ENCODE measurements at regions of chr14 and their contacts with region 1.

Region 1: GRCh38 chr14:54773171-54773975 is 129.3 kb downstream of the GCH1 start:
- DNase-seq: peak; percentile 92 to 96
- ATAC-seq: peak; percentile 90
- H3K4me3 ChIP-seq: no peak overlapping the region
- H3K27ac ChIP-seq: peak overlapping the region; percentile 98 to 99
- H3K4me1 ChIP-seq: peaks cover 6 to 9% of the 10 kb centered on the region in 2 donors
- H3K27me3 ChIP-seq: no peaks in the 10 kb centered on the region

Region 2: GRCh38 chr14:54566410-54567223 is 206.8 kb before region 1 on chr14 and contains the start of gene SAMD4A:
- intact Hi-C with region 1: loop called (anchors 1 to 2 kb)
- DNase-seq: peak; percentile 87 to 92
- ATAC-seq: peak; percentile 55
- H3K4me3 ChIP-seq: peak within 1 kb of the TSS; percentile 94 to 98
- H3K27ac ChIP-seq: peak within 1 kb of the TSS; percentile 95 to 99
- H3K4me1 ChIP-seq: no peaks in the 10 kb centered on the region
- H3K27me3 ChIP-seq: no peaks in the 10 kb centered on the region
- total RNA-seq, gene SAMD4A: 131 to 386 TPM

Region 3: DNA sequence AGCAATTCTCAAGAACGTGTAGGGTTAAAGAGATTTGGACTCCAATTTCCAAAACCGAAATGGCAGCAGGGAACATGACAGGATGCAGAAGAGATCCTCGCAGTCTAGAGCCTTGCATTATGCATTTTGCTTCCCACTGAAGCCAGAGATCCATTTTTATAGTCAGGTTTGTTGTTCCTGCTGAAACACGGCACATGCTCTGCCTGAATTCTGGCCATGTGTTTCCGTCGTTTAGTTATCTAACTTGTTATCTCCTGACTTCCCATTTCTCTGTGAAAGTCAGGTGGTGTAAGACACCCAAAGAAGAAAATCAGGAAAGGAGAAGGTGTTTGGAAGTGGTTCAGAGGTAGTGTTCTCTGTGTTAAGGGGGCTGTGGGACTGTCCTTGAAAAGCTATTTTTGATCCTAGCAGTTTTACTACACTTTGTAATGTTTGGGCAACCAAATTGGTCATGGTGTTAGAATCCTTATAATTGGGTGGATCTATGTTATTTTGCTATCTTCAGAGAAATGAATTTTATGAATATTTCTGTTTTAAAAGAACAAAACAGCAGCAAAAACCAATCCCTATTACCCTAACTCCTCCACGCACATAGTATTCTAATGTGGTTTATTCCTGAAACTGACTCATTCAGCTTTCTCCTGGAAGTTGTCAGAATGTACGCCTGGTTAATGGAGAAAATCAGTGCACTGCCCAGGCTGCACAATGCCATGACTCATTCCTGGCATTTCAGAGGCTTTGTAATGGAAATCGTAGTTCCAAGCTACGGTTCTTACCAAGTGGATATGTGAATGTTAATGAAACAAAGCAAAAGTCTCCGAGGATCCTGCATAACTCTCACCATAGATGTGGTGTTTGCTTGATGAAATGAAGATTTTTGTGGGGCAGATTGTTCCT is 96.3 kb before region 1 on chr14:
- intact Hi-C with region 1: loop called in 1 of 2 experiments (anchors 2 kb)
- DNase-seq: peak in 1 of 2 donors; percentile 65
- ATAC-seq: peak; percentile 92
- H3K4me3 ChIP-seq: no peak overlapping the region
- H3K27ac ChIP-seq: peak overlapping the region; percentile 91 to 99
- H3K4me1 ChIP-seq: peaks cover 8 to 14% of the 10 kb centered on the region in 2 donors
- H3K27me3 ChIP-seq: no peaks in the 10 kb centered on the region

Region 4: DNA sequence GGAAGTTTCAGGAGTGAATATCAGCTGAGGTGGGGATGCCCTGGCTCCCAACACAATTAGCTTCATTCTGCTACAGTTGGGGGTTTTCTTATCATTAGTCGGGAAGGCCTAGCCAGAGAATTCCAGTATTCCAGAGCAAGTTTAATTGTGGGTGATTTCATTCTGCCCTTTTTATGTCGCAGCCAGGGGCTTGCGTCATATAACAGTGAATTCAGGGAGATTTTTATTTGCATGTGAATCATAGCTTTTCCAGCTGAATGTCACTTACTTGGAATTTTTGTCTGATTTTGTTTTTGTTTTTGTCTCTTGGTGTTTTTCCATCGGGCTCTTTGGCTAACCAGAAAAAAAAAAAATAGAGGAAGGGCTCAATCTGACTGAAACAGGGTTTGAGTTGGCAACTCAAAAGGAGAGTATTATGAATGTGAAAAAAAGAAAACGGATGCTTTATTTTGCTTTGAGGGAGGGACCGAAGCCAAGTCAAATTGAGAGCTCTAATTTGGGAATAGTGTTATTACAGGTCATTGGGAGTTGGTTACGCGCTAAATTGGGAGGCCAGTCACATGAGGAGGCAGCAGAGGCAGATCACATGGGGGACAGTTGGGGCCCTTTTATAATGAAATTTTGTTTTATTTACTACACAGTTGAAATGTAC is 87.0 kb before region 1 on chr14:
- intact Hi-C with region 1: loop called (anchors 2 kb)
- DNase-seq: peak; percentile 69 to 82
- ATAC-seq: peak; percentile 86
- H3K4me3 ChIP-seq: no peak overlapping the region
- H3K27ac ChIP-seq: peak overlapping the region; percentile 97 to 100
- H3K4me1 ChIP-seq: peaks cover 8 to 19% of the 10 kb centered on the region in 2 donors
- H3K27me3 ChIP-seq: no peaks in the 10 kb centered on the region

Region 5: GRCh38 chr14:54712465-54713200 is 60.7 kb before region 1 on chr14:
- intact Hi-C with region 1: loop called in 1 of 2 experiments (anchors 5 kb)
- DNase-seq: no peak
- ATAC-seq: peak; percentile 79
- H3K4me3 ChIP-seq: peak overlapping the region in 1 of 2 donors; percentile 15
- H3K27ac ChIP-seq: peak overlapping the region; percentile 97
- H3K4me1 ChIP-seq: peaks cover 19 to 36% of the 10 kb centered on the region in 2 donors
- H3K27me3 ChIP-seq: no peaks in the 10 kb centered on the region

Region 6: DNA sequence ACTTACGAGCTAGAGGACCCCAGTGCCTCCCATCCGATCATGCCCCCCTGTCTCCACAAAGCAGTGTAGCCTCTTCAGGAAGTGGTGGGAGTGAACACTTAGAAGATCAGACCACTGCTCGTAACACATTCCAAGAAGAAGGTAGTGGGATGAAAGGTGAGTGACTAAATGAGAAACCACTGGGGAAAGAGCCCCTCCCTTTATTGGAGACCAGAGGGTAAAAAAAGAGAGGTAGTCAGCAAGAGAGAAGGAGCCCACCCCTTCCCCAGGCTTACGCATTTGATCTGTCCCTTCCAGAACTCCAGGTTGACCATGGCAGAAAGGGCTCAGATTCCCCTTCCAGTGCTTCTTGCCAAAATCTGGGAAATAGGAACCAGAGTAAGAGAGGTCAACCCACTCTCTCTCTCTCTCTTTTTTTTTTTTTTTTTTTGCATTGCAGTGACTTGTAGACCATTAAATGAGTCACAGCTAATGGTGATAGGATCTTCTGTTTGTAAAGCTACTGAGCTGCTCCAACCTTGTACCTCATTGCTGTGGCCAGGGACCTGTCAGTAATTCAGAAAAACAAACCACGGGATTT is 36.2 kb before region 1 on chr14:
- intact Hi-C with region 1: loop called in 1 of 2 experiments (anchors 5 kb)
- DNase-seq: no peak
- ATAC-seq: no peak
- H3K4me3 ChIP-seq: no peak overlapping the region
- H3K27ac ChIP-seq: peak overlapping the region in 1 of 2 donors; percentile 76
- H3K4me1 ChIP-seq: peaks cover 6 to 8% of the 10 kb centered on the region in 2 donors
- H3K27me3 ChIP-seq: no peaks in the 10 kb centered on the region

Measured in aorta (tissue), 5 donors.